Common myeloid progenitor, CD34-positive (primary cell): ENCODE measurements at regions of chr11 and their contacts with region 1.

Region 1: GRCh38 chr11:58788355-58789023 is 56.0 kb downstream of the GLYATL2 start:
- DNase-seq: peak; percentile 60 to 79 (median 78)
- H3K4me3 ChIP-seq: no peak overlapping the region
- H3K27ac ChIP-seq: no peak overlapping the region
- H3K4me1 ChIP-seq: peaks cover 0 to 6% (median 0%) of the 10 kb centered on the region in 4 experiments
- H3K27me3 ChIP-seq: no peaks in the 10 kb centered on the region

Region 2: DNA sequence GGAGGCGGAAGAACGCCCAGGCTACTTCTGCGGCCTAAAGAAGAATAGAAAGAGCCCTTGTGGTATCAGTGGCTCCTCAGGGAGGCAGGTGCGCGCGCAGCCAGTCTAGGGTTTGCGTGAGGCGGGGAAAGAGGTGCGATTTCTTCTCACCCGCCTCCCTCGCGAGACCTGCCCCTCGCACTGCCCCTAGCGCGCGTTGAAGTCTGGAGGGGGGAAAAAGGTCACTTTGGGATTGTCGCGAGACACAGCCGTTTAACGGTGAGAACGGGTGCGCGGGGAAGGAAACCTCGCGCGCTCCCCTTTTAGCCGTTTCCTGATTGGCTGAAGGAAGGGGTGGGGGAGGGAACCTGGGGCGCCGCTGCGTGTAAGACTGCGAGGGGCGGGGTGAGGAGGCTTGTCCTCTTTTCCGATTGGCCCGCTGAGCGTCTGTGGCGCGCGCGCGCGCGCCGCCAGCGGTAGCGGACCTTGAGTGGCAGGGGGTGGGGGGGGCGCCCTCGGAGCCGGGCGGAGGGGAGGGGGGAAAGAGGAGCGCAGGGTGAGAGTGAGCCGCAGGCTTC is 209.8 kb before region 1 on chr11 and contains the start of gene ZFP91:
- CTCF ChIA-PET with region 1: interaction called, 10 read pairs
- POLR2A ChIA-PET with region 1: no interaction called
- DNase-seq: peak; percentile 99 to 100 (median 99)
- H3K4me3 ChIP-seq: peak within 1 kb of the TSS; percentile 87 to 96 (median 92)
- H3K27ac ChIP-seq: peak within 1 kb of the TSS; percentile 100
- H3K4me1 ChIP-seq: peaks cover 46 to 67% (median 58%) of the 10 kb centered on the region in 4 experiments
- H3K27me3 ChIP-seq: no peaks in the 10 kb centered on the region

Region 3: GRCh38 chr11:58654079-58654907 is 134.2 kb before region 1 on chr11:
- CTCF ChIA-PET with region 1: interaction called, 84 read pairs
- POLR2A ChIA-PET with region 1: no interaction called
- DNase-seq: peak; percentile 88 to 95 (median 94)
- H3K4me3 ChIP-seq: no peak overlapping the region
- H3K27ac ChIP-seq: no peak overlapping the region
- H3K4me1 ChIP-seq: peaks cover 0 to 4% (median 0%) of the 10 kb centered on the region in 4 experiments
- H3K27me3 ChIP-seq: no peaks in the 10 kb centered on the region

Region 4: DNA sequence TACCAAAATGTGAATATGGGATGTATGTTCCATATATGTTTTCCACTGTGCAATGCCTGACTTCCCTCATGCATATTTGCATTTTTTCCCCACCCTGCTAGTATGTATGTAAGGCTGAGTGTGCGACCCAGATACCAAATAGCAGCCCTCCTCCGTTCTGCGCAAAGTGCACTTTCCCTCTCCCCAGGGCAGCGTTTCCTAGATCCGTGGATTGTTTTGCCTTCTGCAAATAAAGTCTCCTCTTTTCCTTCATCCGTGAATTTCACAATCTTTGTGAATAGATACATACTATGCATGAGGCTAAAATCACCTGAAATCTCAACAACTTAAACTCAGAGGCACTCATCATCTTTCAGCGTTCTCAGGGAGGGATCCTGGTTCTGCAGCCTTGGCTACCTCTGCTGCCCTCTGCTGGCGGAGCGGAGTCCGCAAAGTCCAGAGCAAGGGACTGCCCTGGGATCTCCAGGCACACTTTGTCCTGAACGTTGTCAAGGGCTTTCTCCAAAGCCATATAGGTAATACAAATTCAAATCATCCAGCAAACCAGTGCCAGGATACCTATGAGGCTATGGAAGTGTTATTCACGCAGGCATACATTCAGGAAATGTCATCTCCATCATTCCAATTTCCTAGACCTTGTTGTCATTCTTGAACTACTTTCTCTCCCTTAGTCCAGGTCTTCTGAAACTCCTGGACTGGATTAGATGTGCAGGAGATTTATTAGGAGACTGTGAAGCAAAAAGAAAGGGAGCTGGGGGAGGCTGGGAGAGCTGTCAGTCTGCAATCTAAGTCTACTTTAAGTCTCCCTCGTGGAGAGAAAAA is 112.9 kb before region 1 on chr11:
- CTCF ChIA-PET with region 1: interaction called, 15 read pairs
- POLR2A ChIA-PET with region 1: no interaction called
- DNase-seq: peak; percentile 53 to 75 (median 62)
- H3K4me3 ChIP-seq: no peak overlapping the region
- H3K27ac ChIP-seq: no peak overlapping the region
- H3K4me1 ChIP-seq: peaks cover 0 to 10% (median 3%) of the 10 kb centered on the region in 4 experiments
- H3K27me3 ChIP-seq: no peaks in the 10 kb centered on the region

Region 5: DNA sequence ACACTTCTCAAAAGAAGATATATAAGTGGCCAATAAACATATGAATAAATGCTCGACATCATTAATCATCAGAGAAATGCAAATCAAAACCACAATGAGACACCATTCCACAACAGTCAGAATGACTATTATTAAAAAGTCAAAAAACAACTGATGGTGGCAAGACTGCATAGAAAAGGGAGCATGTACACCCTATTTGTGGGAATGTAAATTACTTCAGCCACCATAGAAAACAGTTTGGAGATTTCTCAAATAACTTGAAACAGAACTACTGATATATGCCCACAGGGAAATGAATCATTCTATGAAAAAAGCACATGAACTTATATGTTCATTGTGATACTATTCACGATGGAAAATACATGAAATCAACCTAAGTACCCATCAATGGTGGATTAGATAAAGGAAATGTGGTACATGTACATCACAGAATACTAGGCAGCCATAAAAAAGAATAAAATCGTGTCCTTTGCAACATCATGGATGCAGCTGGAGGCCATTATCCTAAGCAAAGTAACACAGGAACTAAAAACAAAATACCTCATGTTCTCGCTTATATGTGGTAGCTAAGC is 13.6 kb after region 1 on chr11:
- CTCF ChIA-PET with region 1: interaction called, 11 read pairs
- POLR2A ChIA-PET with region 1: no interaction called
- DNase-seq: no peak
- H3K4me3 ChIP-seq: no peak overlapping the region
- H3K27ac ChIP-seq: no peak overlapping the region
- H3K4me1 ChIP-seq: no peaks in the 10 kb centered on the region
- H3K27me3 ChIP-seq: no peaks in the 10 kb centered on the region